ENCODE measurements at regions of chr2 and their contacts with region 1.

Region 1: DNA sequence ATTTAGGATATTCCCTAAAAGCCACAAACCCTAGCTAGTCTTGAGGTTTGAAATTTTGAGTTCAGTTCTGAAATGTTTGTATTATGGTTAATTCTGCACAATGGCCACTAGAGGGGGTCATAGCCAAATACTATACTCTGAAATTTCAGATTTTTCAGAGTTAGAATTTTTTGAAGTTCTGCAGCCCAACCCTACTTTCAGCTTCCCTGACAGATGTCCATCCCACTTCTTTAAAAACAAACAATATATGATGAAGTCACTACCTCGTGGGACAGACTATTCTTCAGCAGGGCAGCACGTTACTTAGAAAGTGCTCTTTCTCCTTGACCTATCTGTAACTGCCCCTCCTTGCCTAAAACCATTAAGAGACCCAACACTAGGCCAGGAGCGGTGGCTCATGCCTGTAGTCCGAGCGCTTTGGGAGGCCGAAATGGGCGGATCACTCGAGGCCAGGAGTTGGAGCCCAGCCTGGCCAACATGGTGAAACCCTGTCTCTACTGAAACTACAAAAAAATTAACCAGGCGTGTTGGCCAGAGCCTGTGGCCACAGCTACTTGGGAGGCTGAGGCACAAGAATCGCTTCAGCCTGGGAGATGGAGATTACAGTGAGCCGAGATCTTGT is 48.2 kb upstream of the PAPOLG start:
- DNase-seq: peak; percentile 36 to 47
- ATAC-seq: peak; percentile 60 to 75
- H3K4me3 ChIP-seq: no peak overlapping the region
- H3K27ac ChIP-seq: no peak overlapping the region
- H3K4me1 ChIP-seq: no peaks in the 10 kb centered on the region
- CTCF ChIP-seq: peak; percentile 94
- EP300 ChIP-seq: no peak
- POLR2A ChIP-seq: no peak
- RAD21 ChIP-seq: peak; percentile 82 to 84

Region 2: GRCh38 chr2:60439219-60439974 is 268.5 kb before region 1 on chr2:
- CTCF ChIA-PET with region 1: no interaction called
- POLR2A ChIA-PET with region 1: no interaction called
- DNase-seq: no peak
- ATAC-seq: peak; percentile 76 to 91; a peak in 4 of 6 replicates
- H3K4me3 ChIP-seq: no peak overlapping the region
- H3K27ac ChIP-seq: no peak overlapping the region
- H3K4me1 ChIP-seq: no peaks in the 10 kb centered on the region
- CTCF ChIP-seq: no peak
- EP300 ChIP-seq: no peak
- POLR2A ChIP-seq: no peak
- RAD21 ChIP-seq: no peak

Region 3: GRCh38 chr2:60693551-60693950 is 14.3 kb before region 1 on chr2:
- CTCF ChIA-PET with region 1: interaction called, 30 read pairs
- POLR2A ChIA-PET with region 1: no interaction called
- DNase-seq: no peak
- ATAC-seq: no peak
- H3K4me3 ChIP-seq: no peak overlapping the region
- H3K27ac ChIP-seq: no peak overlapping the region
- H3K4me1 ChIP-seq: no peaks in the 10 kb centered on the region
- CTCF ChIP-seq: no peak
- EP300 ChIP-seq: no peak
- POLR2A ChIP-seq: no peak
- RAD21 ChIP-seq: no peak

Region 4: GRCh38 chr2:60725466-60725865 is 17.6 kb after region 1 on chr2:
- CTCF ChIA-PET with region 1: interaction called, 23 read pairs
- POLR2A ChIA-PET with region 1: no interaction called
- DNase-seq: no peak
- ATAC-seq: no peak
- H3K4me3 ChIP-seq: no peak overlapping the region
- H3K27ac ChIP-seq: no peak overlapping the region
- H3K4me1 ChIP-seq: no peaks in the 10 kb centered on the region
- CTCF ChIP-seq: no peak
- EP300 ChIP-seq: no peak
- POLR2A ChIP-seq: no peak
- RAD21 ChIP-seq: no peak

Region 5: DNA sequence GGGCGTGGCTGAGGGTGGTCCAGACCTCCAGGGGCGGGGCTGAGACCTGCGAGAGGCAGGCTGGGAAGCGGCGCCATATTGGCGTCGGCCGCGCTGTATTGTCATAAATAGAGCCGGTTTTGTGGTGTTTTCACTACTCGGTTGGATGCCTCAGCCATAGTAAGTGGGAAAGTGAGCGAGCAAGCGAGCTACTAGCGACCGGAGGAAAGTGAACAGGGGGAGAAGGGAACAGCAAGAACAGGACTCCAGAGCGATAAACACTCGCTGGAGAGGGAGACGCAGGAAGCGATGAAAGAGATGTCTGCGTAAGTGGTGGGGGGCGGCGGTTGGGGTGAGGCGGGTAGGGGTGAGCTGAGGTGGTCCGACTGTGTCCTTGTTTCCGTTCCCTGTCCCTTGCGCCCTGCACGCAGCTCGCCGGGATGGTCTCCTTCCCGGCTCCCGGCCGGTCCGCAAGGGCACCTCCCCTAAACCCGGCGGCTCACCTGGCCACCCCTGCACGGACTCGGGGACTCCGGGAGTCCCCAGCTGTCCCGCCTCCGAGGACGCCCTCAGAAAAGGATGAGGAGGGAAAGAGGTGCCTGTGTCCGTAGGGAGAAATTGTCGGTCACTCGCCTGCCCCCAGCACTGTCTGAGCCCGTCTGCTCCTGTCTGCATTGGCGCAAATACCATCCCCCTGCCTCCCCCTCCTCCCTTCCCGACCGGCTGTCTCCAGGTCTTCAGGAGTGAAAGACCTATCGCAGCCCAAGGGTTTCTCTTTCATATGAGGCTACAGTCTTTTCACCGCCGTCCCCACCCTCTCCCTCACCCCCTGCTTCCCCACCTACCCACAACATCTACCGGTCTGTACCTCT is 48.6 kb after region 1 on chr2 and contains the start of gene PAPOLG:
- CTCF ChIA-PET with region 1: interaction called, 14 read pairs
- POLR2A ChIA-PET with region 1: no interaction called
- DNase-seq: peak; percentile 68 to 92
- ATAC-seq: peak; percentile 98 to 100
- H3K4me3 ChIP-seq: peak within 1 kb of the TSS; percentile 88
- H3K27ac ChIP-seq: peak within 1 kb of the TSS; percentile 89 to 90
- H3K4me1 ChIP-seq: peaks cover 12% of the 10 kb centered on the region; the same call in 2 of the 3 replicates
- CTCF ChIP-seq: no peak
- EP300 ChIP-seq: no peak
- POLR2A ChIP-seq: peak; percentile 95
- RAD21 ChIP-seq: no peak
- polyA plus RNA-seq, gene PAPOLG: 20.9 and 21.8 TPM in 2 replicates

Region 6: DNA sequence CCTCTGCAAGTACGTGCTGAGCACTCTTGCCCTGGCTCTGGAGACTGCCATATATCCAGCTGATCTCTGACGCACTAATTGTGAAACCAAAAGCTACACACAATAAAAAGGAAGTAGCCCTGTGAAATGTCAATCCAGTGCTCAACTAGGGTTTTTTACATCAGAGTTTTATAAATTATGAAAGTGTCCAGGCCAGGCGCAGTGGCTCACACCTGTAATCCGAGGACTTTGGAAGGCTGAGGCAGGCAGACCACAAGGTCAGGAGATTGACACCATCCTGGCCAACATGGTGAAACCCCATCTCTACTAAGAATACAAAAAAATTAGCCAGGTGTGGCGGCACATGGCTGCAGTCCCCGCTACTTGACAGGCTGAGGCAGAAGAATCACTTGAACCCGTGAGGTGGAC is 285.1 kb after region 1 on chr2:
- CTCF ChIA-PET with region 1: interaction called, 135 read pairs
- POLR2A ChIA-PET with region 1: no interaction called
- DNase-seq: no peak
- ATAC-seq: no peak
- H3K4me3 ChIP-seq: no peak overlapping the region
- H3K27ac ChIP-seq: no peak overlapping the region
- H3K4me1 ChIP-seq: peaks cover 9% of the 10 kb centered on the region
- CTCF ChIP-seq: no peak
- EP300 ChIP-seq: no peak
- POLR2A ChIP-seq: no peak
- RAD21 ChIP-seq: no peak